AG04450 (cell line): ENCODE measurements at regions of chr11 and their contacts with region 1.

Region 1: DNA sequence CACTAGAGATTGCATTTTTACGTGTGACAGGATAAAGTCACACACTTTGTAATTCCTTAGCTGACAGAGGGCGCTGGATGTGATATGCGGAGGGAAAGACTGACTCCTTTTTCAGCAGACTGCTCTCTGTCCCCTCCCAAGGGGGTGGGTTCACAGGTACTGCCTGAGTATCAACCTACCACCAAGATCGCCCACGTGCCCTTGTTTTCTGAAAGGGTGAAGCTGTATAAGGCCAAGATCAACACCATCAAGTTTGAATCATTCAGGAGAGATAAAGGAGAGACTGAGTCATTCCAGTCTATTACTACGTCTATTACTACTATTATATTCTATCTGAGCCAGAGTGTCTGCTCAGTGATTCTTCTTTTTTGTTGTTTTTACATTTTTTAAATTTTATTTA is 30.7 kb downstream of the BUD13 start:
- DNase-seq: no peak
- H3K4me3 ChIP-seq: no peak overlapping the region
- H3K27ac ChIP-seq: no peak overlapping the region
- H3K27me3 ChIP-seq: no peaks in the 10 kb centered on the region
- CTCF ChIP-seq: no peak

Region 2: GRCh38 chr11:115885535-115886421 is 856.3 kb before region 1 on chr11:
- CTCF ChIA-PET with region 1: no interaction called
- POLR2A ChIA-PET with region 1: no interaction called
- DNase-seq: no peak
- H3K4me3 ChIP-seq: no peak overlapping the region
- H3K27ac ChIP-seq: no peak overlapping the region
- H3K27me3 ChIP-seq: peaks cover 15% of the 10 kb centered on the region
- CTCF ChIP-seq: no peak

Region 3: DNA sequence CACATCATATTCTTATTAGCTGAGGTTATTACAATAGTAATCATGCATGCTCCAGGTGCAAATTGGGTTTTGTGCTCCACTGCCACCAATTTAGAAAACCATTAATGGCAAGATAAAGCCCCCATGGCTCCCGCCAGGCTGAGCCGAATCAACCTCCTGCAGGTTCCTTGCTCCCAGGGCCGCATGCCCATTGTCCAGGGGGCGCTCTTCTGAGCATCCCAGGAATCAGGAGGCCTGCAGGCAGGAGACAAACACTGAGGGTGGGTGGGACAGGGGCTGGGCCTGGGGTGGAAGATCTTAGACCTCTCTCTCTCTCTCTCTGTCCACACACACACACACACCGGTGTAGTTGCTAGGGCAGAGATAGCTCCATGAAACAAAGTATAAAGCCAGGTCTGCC is 26.7 kb before region 1 on chr11:
- CTCF ChIA-PET with region 1: interaction called, 10 read pairs
- POLR2A ChIA-PET with region 1: no interaction called
- DNase-seq: no peak
- H3K4me3 ChIP-seq: no peak overlapping the region
- H3K27ac ChIP-seq: no peak overlapping the region
- H3K27me3 ChIP-seq: peaks cover 26% of the 10 kb centered on the region
- CTCF ChIP-seq: no peak

Region 4: DNA sequence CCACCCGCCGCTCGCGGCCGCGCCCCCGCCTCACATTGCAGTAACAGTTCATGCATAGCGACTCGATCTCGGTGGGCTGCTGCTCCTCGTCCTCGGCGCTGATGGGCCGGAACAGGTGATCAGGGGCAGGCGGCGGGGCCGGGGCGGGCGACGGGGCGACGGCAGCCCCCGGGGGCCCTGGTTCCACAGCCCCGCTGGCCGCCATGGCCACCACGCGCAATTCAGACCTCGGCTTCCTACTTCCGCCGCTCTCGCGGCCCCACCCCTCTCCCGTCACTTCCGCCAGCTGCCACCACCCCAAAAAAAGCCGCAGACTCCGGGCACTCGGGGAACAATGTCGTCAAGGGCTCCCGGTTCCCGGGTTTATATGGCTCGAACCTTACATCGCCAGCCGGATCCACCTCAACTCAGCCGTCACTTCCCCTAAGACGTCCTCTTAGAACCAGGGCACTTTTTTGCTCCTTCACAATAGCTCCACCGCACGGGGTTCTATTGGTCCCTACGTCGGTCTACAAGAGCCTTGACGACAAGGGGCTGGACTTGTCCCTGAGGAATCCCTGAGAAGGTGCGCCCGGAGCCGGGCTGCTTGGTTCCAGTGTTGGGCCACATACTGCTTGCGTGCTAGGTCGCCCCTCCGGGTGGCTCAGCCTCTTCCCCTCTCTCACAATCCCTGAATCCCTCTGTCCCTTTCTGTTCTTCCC is 45.8 kb after region 1 on chr11 and contains the start of gene ZPR1:
- CTCF ChIA-PET with region 1: no interaction called
- POLR2A ChIA-PET with region 1: no interaction called
- DNase-seq: no peak
- H3K4me3 ChIP-seq: peak within 1 kb of the TSS; percentile 89
- H3K27ac ChIP-seq: peak within 1 kb of the TSS; percentile 65
- H3K27me3 ChIP-seq: no peaks in the 10 kb centered on the region
- CTCF ChIP-seq: peak; percentile 7; the same call in 1 of the 2 replicates
- polyA plus RNA-seq, gene ZPR1: 57.1 and 57.7 TPM in 2 replicates

Region 5: DNA sequence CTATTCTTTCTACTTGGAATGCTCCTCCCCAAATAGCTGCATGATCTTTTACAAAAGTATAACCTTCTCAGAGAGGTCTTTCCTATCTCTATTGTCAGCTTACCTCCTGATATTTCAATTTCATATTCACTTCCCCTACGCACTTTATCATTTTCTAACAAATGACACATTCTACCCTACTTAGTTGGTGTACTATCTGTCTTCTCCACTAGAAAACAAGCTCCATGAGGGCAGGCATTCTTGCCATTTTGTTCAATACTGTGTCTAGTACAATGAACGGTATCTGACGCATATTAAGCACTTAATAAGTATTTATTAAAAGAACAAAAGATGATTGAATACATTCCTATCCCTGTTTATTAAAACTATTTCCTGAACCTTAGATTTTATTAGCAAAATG is 191.9 kb after region 1 on chr11:
- CTCF ChIA-PET with region 1: no interaction called
- POLR2A ChIA-PET with region 1: interaction called, 13 read pairs
- DNase-seq: no peak
- H3K4me3 ChIP-seq: no peak overlapping the region
- H3K27ac ChIP-seq: no peak overlapping the region
- H3K27me3 ChIP-seq: no peaks in the 10 kb centered on the region
- CTCF ChIP-seq: no peak